Activated CD4-positive, alpha-beta T cell treated with anti-CD3 and anti-CD28 coated beads, Interleukin-2, amount 10 ng/mL, durations not matched to agents 24 days and 14 days (primary cell): ENCODE measurements at regions of chr12 and their contacts with region 1.

Region 1: GRCh38 chr12:118404876-118405521 is 28.6 kb downstream of the SUDS3 start:
- DNase-seq: peak; percentile 86
- H3K4me3 Mint-ChIP-seq: no peak overlapping the region
- H3K27ac Mint-ChIP-seq: no peak overlapping the region
- H3K4me1 Mint-ChIP-seq: peaks cover 3% of the 10 kb centered on the region
- H3K27me3 Mint-ChIP-seq: no peaks in the 10 kb centered on the region

Region 2: DNA sequence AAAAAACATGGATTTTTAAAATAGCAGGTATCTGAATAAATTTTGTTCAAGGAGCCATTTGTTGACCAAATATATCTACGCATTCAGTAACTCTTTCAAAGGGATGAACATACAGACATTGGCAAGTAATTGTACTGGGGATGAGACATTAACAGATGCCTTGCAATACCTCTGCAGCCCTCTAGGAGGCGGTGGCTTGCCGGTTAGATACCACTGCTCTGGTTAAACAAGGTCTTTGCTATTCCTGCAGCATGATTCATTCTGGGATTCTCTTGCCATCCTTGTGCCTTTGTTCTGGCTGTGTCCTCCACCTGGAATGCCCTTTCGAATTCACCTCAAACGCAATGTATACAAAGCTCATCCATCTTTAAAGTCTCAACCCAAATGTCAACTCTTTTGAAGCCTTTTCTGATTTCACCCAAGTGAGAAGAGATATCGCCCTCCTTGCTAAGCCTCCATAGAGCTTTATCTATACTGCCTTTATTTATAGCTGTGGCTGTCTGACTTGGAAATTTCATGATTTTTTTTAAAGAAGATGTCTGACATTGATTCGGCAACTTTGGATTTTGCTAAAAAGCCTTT is 445.3 kb after region 1 on chr12:
- intact Hi-C with region 1: loop called (anchors 10 kb)
- DNase-seq: peak; percentile 58
- H3K4me3 Mint-ChIP-seq: no peak overlapping the region
- H3K27ac Mint-ChIP-seq: no peak overlapping the region
- H3K4me1 Mint-ChIP-seq: no peaks in the 10 kb centered on the region
- H3K27me3 Mint-ChIP-seq: no peaks in the 10 kb centered on the region

Region 3: GRCh38 chr12:119036878-119037825 is 632.2 kb after region 1 on chr12:
- intact Hi-C with region 1: loop called (anchors 5 kb)
- DNase-seq: peak; percentile 70
- H3K4me3 Mint-ChIP-seq: no peak overlapping the region
- H3K27ac Mint-ChIP-seq: no peak overlapping the region
- H3K4me1 Mint-ChIP-seq: no peaks in the 10 kb centered on the region
- H3K27me3 Mint-ChIP-seq: no peaks in the 10 kb centered on the region

Region 4: DNA sequence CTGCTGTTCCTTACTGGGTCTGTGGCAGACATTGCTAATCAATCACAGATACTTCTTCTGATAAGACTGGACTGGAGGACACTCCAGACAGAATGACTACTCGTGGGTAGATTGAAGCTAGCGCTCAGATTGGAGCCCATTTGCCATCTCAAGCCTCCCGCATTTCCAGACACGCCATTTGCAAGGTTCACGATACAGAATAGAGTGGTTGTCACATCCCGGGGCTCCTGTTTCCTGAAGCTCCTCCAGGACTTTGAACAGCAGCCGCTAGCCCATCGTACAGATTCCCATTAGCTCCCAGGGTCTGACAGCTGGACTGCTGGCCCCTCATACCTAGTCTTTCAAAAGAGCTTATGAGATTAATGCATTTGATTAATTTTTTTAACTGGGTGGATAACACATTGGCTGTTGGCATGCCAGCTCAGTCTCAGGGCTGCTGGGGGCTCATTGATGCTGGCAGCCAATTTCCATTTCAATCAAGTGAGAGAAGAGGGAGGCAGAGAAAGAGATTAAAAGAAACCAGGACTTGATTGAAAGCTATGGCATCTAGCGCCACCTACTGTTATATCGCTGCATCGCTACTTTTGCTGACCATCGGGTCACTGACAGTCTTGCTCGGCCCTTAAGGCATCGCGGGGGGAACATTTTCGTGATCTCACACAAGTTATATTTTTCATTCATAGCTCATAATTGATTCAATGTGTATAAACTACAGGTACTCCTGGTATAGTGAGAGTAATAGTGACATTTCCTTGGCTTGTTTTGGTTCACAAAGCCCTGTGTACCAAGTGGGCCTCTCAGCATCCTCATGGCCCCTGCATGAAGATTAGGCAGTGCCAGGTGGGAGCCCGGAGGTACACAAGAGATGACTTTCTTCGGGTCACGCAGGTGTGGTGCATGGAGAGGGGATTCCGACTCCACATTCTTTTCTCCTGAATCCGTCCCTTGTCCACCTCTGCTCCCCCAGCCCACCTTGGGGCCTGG is 1008.1 kb after region 1 on chr12:
- intact Hi-C with region 1: loop called (anchors 10 kb)
- DNase-seq: peak; percentile 81
- H3K4me3 Mint-ChIP-seq: no peak overlapping the region
- H3K27ac Mint-ChIP-seq: no peak overlapping the region
- H3K4me1 Mint-ChIP-seq: peaks cover 4% of the 10 kb centered on the region
- H3K27me3 Mint-ChIP-seq: peaks cover 4% of the 10 kb centered on the region